ENCODE measurements at regions of chr14 and their contacts with region 1.

Region 1: GRCh38 chr14:35121887-35122695 is at the starts of genes PPP2R3C and PRORP:
- DNase-seq: peak; percentile 93
- H3K4me3 Mint-ChIP-seq: peak within 1 kb of the TSS; percentile 95
- H3K27ac Mint-ChIP-seq: peak within 1 kb of the TSS; percentile 99
- H3K4me1 Mint-ChIP-seq: peaks cover 64% of the 10 kb centered on the region
- H3K27me3 Mint-ChIP-seq: no peaks in the 10 kb centered on the region
- total RNA-seq, gene PPP2R3C: 44.5 to 47.5 TPM
- total RNA-seq, gene PRORP: 37.9 to 40.8 TPM

Region 2: GRCh38 chr14:34539407-34540180 is 582.5 kb before region 1 on chr14 and contains the start of gene EAPP:
- CTCF ChIA-PET with region 1: no interaction called
- intact Hi-C with region 1: loop called (anchors 5 kb)
- DNase-seq: peak; percentile 98
- H3K4me3 Mint-ChIP-seq: peak within 1 kb of the TSS; percentile 95
- H3K27ac Mint-ChIP-seq: peak within 1 kb of the TSS; percentile 98
- H3K4me1 Mint-ChIP-seq: peaks cover 32% of the 10 kb centered on the region
- H3K27me3 Mint-ChIP-seq: no peaks in the 10 kb centered on the region
- total RNA-seq, gene EAPP: 34.0 to 35.4 TPM

Region 3: GRCh38 chr14:34843011-34843554 is 279.0 kb before region 1 on chr14:
- CTCF ChIA-PET with region 1: no interaction called
- intact Hi-C with region 1: loop called (anchors 2 kb)
- DNase-seq: peak; percentile 59
- H3K4me3 Mint-ChIP-seq: no peak overlapping the region
- H3K27ac Mint-ChIP-seq: peak overlapping the region; percentile 89
- H3K4me1 Mint-ChIP-seq: peaks cover 30% of the 10 kb centered on the region
- H3K27me3 Mint-ChIP-seq: no peaks in the 10 kb centered on the region

Region 4: DNA sequence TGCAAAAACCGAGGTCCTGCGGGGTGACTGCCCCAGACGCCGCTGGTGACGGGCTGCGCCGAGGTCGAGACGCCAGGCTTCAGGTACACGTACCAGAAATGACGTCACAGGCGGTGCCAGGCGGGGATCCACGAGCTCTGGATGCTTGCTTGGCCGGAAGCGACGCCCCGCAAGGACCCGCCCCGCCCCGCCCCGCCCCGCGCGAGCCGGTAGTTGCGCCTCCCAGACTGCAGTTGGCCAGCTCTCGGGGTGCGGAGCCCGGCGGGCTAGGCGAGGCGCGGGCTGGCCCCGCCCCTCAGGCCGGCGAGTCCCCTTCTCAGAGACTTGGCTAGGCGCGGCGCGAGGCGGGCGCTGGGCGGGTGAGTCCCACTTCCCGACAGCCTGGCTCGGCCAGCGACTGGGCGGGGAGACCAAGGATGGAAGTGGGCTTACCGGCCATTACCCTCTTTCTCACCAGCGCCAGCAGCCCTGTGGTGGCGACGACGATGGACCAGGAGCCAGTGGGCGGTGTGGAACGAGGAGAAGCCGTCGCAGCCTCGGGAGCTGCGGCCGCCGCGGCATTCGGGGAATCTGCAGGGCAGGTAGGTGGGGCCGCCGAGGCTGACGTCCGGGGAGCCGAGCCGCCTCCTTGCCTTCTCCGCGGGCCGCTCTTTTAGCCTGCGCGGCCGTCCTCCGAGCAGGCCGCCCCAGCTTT is 75.9 kb before region 1 on chr14 and contains the start of gene FAM177A1:
- CTCF ChIA-PET with region 1: interaction called, 3 read pairs
- intact Hi-C with region 1: loop called (anchors 1 kb)
- DNase-seq: peak; percentile 99
- H3K4me3 Mint-ChIP-seq: peak within 1 kb of the TSS; percentile 89
- H3K27ac Mint-ChIP-seq: peak within 1 kb of the TSS; percentile 98
- H3K4me1 Mint-ChIP-seq: peaks cover 25% of the 10 kb centered on the region
- H3K27me3 Mint-ChIP-seq: no peaks in the 10 kb centered on the region
- total RNA-seq, gene FAM177A1: 55.0 to 58.5 TPM

Region 5: DNA sequence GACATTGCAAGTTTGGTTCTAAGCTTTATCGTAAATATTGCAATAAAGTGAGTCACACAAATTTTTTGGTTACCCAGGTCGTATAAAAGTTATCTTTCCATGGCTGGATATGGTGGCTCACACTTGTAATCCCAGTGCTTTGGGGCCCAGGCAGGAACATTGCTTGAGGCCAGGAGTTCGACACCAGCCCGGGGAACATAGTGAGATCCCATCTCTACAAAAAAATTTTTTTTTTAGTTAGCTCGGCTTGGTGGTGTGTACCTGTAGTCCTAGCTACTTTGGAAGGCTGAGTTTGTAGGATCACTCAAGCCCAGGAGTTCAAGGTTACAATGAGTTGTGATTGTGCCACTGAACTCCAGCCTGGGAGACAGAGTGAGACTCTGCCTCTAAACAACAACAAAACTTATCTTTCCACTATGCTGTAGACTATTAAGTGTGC is 24.6 kb after region 1 on chr14:
- CTCF ChIA-PET with region 1: no interaction called
- intact Hi-C with region 1: no loop called
- DNase-seq: no peak
- H3K4me3 Mint-ChIP-seq: no peak overlapping the region
- H3K27ac Mint-ChIP-seq: no peak overlapping the region
- H3K4me1 Mint-ChIP-seq: peaks cover 5% of the 10 kb centered on the region
- H3K27me3 Mint-ChIP-seq: no peaks in the 10 kb centered on the region

Region 6: DNA sequence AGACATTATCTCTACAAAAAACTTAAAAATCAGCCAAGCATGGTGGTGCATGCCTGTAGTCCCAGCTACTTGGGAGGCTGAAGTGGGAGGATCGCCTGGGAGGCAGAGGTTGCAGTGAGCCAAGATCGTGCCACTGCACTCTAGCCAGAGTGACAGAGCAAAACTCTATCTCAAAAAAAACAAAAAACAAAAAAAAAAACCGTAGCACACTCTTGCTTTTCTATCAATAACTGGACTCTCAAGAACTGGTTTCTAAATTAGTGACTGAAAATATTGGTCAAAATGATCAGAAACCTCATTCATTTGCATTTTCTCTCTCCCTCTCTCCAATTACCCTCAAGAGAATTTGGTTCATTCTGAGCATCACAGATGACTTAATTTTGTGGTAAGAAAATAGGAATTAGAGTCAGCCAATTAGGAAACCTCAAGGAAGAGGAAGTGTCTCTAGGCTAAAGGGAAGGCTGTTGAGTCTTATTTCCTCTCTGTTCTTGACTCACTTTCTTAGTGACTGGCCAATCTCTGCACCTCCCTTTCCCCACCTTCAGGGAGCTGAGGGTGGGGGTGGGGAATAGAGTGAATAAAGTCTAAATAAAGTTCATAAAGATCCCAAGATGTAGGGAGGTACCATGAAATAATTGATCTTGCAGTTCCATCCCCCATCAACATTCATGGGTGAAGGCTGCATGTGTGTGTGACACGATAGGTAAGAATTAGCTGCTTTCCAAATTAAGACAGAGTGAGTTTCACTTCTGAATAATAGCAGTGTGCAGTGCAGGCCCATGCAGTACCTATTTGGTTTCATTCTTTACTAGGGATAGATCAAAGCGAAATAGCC is 163.3 kb after region 1 on chr14:
- CTCF ChIA-PET with region 1: interaction called, 3 read pairs
- intact Hi-C with region 1: loop called (anchors 1 kb)
- DNase-seq: peak; percentile 47
- H3K4me3 Mint-ChIP-seq: peak overlapping the region; percentile 35
- H3K27ac Mint-ChIP-seq: peak overlapping the region; percentile 96
- H3K4me1 Mint-ChIP-seq: peaks cover 55% of the 10 kb centered on the region
- H3K27me3 Mint-ChIP-seq: no peaks in the 10 kb centered on the region

Region 7: DNA sequence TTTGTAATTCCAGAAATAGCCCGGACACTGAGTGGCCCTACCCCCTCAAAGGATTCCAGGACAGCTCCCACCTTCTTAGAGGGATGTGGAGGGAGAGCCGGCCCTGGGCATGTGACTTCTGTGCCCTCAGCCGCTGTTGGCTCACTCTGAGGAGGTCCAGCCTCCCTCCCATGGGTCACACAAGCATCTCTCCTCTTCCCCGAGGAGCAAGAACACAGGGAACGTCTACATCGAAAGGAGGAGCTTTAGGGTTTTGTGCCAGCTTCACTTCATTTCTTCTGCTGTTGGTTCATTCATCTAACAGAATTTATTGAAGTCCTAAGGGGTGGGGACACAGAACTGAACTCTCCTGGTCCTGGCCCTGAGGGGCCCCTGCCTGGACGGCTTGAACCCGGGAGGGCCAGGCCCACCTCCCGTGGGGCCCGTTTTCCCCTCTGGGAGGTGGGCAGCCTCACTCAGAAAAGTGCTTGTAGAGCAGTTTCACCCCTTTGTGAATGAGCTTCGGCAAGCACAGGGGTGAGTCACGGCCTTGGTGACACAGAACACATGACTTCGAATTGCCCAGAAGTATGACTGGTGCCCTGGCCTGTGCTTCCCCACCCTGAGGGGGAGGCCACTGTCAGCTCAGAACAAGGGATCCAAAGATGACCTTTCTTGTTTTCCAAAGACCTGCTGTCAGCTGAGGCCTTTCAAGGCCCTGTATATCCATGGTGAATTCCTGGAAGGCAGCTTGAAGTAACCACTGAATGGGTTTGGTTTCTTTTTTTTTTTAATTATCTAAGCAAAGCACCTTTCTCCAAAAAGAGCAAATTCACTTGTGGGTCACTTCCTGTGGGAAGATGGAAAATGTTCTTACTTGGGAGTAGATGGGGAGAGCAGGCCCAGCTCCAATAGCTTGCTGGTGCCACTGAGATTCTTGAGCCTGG is 243.3 kb after region 1 on chr14:
- CTCF ChIA-PET with region 1: no interaction called
- intact Hi-C with region 1: loop called (anchors 1 kb)
- DNase-seq: peak; percentile 94
- H3K4me3 Mint-ChIP-seq: no peak overlapping the region
- H3K27ac Mint-ChIP-seq: peak overlapping the region; percentile 92
- H3K4me1 Mint-ChIP-seq: peaks cover 60% of the 10 kb centered on the region
- H3K27me3 Mint-ChIP-seq: no peaks in the 10 kb centered on the region

Region 8: GRCh38 chr14:36315159-36315853 is 1193.2 kb after region 1 on chr14:
- CTCF ChIA-PET with region 1: no interaction called
- intact Hi-C with region 1: loop called (anchors 5 kb)
- DNase-seq: peak; percentile 80
- H3K4me3 Mint-ChIP-seq: peak overlapping the region; percentile 43
- H3K27ac Mint-ChIP-seq: peak overlapping the region; percentile 89
- H3K4me1 Mint-ChIP-seq: peaks cover 40% of the 10 kb centered on the region
- H3K27me3 Mint-ChIP-seq: no peaks in the 10 kb centered on the region